Left ventricle myocardium superior (tissue), 1 donor: ENCODE measurements at regions of chr12 and their contacts with region 1.

Region 1: DNA sequence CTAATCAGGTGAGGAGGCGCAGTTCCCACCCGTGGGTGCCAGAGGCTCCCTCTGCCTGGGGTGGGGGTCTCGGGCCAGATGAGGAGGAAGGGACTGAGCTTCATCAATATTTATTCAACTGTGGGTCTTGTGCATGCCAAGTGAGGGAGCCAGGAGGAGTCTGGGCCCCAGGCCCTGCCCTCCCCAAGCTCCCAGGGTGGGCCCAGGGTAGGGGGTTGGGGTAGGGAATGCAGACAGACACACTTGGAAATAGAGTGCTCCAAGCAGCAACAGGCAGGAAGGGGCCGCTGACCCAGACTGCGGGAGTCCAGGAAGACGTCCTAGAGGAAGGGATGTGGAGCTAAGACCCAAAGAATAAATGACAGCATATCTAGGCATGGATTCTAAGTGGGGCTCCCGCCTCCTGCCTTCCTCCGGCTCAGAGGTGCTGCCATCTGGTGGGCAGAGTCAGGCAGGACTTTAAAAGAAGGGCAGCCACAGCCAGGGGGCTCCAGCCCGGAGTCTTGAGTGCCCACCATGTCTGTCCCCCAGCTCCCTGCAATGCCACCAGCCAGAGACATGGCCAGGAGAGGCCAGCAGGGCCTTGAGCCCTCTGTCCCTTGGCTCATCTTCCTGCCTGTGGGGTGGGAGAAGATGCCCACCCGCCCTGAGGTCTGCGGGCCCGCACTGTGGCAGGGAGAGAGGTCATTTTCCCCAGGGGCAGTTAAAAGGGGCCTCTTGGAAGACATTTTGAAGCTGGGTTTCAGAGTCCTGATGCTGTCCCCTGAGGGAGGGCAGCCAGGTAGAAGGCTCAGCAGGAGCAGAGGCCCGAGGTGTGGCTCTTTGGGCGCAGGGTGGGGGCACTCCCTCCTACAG is 70.1 kb downstream of the PHETA1 start:
- DNase-seq: peak; percentile 61
- ATAC-seq: peak; percentile 74

Region 2: GRCh38 chr12:110893956-110894355 is 404.9 kb before region 1 on chr12:
- intact Hi-C with region 1: loop called (anchors 5 kb)
- DNase-seq: no peak
- ATAC-seq: no peak